GM23248 (cell line): ENCODE measurements at regions of chr20 and their contacts with region 1.

Region 1: DNA sequence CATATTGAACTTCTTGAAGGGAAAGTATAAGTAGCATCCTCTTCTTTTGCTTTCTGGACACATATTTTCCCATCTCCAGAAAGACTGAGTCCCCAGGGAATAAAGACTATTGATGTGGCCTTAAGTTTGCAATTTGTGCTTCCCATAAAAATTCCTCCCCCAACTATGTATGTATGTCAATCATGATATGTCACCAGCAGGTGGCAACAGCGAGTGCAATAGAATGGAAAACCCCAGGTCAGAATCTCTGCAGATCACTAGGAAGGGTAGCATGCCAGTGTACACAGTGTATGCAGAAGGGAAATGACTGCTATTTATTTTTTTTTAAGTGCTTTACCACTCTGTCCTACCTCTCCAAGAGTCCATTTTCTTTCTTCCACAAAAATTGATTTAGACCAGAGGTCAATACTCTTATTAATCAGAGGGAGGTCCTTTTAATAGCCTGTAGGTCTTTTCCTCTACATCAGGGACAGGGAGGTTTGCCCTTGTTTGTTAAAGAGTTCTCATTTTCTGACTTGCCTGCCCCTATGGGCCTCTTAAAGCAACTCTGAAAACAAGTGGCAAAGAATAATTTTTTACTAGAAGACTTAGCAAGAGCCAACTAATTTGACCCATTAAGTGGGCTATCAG is 61.4 kb downstream of the BMP2 start:
- DNase-seq: peak; percentile 70
- H3K4me3 ChIP-seq: no peak overlapping the region
- H3K27ac ChIP-seq: no peak overlapping the region
- H3K4me1 ChIP-seq: no peaks in the 10 kb centered on the region
- H3K27me3 ChIP-seq: no peaks in the 10 kb centered on the region

Region 2: DNA sequence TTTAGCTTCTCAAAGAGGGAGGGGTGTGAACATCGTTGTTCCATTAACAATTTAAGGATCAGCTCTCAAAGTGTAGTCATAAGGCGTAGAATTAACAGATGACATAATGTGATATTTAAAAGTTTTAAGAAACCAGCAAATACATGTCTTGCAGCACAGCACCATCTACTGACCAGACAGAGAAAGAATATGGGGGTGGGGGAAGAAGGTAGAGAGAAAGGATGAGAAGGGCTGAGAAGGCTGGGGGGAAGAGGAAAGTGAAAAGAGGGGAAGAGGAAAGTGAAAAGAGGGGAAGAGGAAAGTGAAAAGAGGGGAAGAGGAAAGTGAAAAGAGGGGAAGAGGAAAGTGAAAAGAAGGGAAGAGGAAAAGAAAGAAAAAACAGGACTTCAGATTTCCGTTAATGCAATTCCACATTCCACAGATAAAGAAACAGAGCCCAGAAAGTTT is 1030.5 kb after region 1 on chr20:
- in situ Hi-C with region 1: loop called (anchors 25 kb)
- DNase-seq: peak; percentile 79
- H3K4me3 ChIP-seq: no peak overlapping the region
- H3K27ac ChIP-seq: no peak overlapping the region
- H3K4me1 ChIP-seq: peaks cover 23% of the 10 kb centered on the region
- H3K27me3 ChIP-seq: no peaks in the 10 kb centered on the region